Endothelial cell of umbilical vein (primary cell): ENCODE measurements at regions of chr19 and their contacts with region 1.

Region 1: GRCh38 chr19:1672038-1672768 is 19.8 kb upstream of the TCF3 start:
- DNase-seq: no peak
- H3K4me3 ChIP-seq: no peak overlapping the region
- H3K27ac ChIP-seq: no peak overlapping the region
- H3K4me1 ChIP-seq: no peaks in the 10 kb centered on the region
- H3K27me3 ChIP-seq: peaks cover 24 to 43% of the 10 kb centered on the region in 2 experiments
- CTCF ChIP-seq: peak; percentile 57 to 71
- POLR2A ChIP-seq: no peak

Region 2: GRCh38 chr19:1551068-1552040 is 120.8 kb before region 1 on chr19:
- CTCF ChIA-PET with region 1: interaction called, 177 read pairs
- POLR2A ChIA-PET with region 1: no interaction called
- dilution Hi-C with region 1: no loop called
- intact Hi-C with region 1: loop called (anchors 1 kb)
- DNase-seq: no peak
- H3K4me3 ChIP-seq: no peak overlapping the region
- H3K27ac ChIP-seq: no peak overlapping the region
- H3K4me1 ChIP-seq: no peaks in the 10 kb centered on the region
- H3K27me3 ChIP-seq: no peaks in the 10 kb centered on the region
- CTCF ChIP-seq: no peak
- POLR2A ChIP-seq: no peak

Region 3: DNA sequence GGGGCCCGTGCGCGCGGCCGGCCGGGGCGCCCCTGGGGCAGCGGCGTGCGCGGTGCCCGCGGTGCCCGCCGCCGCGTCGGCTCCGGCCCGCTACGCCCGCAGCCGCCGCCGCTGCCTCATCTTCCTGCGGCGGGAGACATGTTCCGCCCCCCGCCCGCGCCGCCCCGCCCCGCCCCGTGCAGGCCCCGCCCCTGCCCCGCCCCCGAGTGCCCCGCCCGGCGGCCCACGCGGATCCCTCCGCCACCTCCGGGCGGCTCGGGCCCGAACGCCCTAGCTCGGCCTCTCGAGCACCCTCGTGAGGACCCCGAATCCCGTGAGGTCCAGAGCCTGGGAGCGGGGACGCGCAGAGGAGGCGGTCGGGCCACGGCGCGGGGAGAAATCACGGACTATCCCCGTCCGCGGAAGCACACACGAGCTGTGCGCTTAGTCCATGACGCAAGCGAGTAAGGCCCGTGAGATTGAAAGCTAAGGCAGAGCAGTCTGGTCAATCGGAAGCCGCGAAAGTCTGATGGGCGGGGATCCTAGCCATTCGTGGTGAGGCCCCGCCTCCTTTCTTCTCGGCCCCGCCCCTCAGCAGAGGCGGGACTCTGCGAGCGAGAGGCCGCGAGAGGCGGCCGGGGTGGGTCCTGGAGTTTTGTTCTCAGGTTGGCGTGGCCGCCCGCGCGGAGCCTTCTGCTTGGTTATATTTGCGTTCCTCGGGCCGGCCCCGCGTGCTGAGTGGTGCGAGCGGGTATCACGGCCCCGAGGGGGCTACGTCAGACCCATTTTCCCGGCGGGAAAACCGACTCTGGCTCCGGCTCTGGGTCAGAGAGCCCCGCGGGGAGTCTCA is 19.5 kb before region 1 on chr19 and contains the start of gene TCF3:
- CTCF ChIA-PET with region 1: interaction called, 10 read pairs
- POLR2A ChIA-PET with region 1: no interaction called
- dilution Hi-C with region 1: no loop called
- intact Hi-C with region 1: no loop called
- DNase-seq: peak; percentile 99
- H3K4me3 ChIP-seq: peak within 1 kb of the TSS; percentile 45 to 89 (median 62)
- H3K27ac ChIP-seq: peak within 1 kb of the TSS; percentile 98
- H3K4me1 ChIP-seq: peaks cover 2% of the 10 kb centered on the region
- H3K27me3 ChIP-seq: no peaks in the 10 kb centered on the region
- CTCF ChIP-seq: no peak
- POLR2A ChIP-seq: peak; percentile 28
- total RNA-seq, gene TCF3: 193 and 197 TPM in 2 replicates

Region 4: DNA sequence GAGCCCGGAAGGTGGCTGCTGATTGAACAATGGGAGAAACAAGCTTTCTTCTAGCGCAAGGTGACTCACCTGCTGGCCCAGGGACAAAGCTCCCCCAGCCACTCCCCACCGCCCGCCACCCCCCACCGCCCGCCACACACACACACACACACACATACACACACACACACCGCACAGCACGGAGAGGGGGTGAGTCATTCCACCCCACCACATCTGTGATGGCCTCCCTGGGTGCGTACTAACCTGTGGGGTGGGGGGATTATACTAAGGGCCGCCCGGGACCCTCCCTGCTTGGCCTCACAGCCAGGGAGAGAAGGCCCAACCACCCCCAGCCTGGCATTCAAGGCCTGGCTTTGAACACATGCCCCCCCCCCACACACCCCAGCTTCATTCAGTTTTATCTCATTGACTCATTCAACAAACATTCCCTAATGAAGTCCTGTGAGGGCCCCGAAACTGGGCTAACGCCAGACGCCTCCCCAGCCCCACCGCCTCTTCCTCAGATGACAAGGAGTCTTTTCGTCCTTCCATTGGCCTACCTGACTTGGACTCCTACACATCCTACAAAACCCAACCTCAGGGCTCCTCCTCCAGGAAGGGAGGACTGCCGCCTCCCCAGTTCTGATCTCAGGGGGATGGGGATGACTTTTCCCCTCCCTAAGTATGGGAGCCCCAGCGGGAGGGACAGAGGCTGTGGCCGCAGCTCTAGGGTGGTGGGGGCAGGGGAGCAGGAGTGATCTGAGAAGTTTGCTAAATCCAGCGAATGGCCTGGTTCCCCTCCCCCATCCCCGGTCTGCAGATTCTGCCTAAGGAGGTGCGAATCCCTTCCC is 75.3 kb after region 1 on chr19:
- CTCF ChIA-PET with region 1: interaction called, 12 read pairs
- POLR2A ChIA-PET with region 1: no interaction called
- dilution Hi-C with region 1: no loop called
- intact Hi-C with region 1: no loop called
- DNase-seq: peak; percentile 31
- H3K4me3 ChIP-seq: no peak overlapping the region
- H3K27ac ChIP-seq: no peak overlapping the region
- H3K4me1 ChIP-seq: peaks cover 16% of the 10 kb centered on the region
- H3K27me3 ChIP-seq: peaks cover 44 to 47% of the 10 kb centered on the region in 2 experiments
- CTCF ChIP-seq: no peak
- POLR2A ChIP-seq: no peak

Region 5: GRCh38 chr19:1774999-1775772 is 103.0 kb after region 1 on chr19:
- CTCF ChIA-PET with region 1: interaction called, 29 read pairs
- POLR2A ChIA-PET with region 1: no interaction called
- dilution Hi-C with region 1: no loop called
- intact Hi-C with region 1: no loop called
- DNase-seq: no peak
- H3K4me3 ChIP-seq: no peak overlapping the region
- H3K27ac ChIP-seq: no peak overlapping the region
- H3K4me1 ChIP-seq: no peaks in the 10 kb centered on the region
- H3K27me3 ChIP-seq: peaks cover 28 to 34% of the 10 kb centered on the region in 2 experiments
- CTCF ChIP-seq: peak; percentile 39 to 64
- POLR2A ChIP-seq: no peak

Region 6: DNA sequence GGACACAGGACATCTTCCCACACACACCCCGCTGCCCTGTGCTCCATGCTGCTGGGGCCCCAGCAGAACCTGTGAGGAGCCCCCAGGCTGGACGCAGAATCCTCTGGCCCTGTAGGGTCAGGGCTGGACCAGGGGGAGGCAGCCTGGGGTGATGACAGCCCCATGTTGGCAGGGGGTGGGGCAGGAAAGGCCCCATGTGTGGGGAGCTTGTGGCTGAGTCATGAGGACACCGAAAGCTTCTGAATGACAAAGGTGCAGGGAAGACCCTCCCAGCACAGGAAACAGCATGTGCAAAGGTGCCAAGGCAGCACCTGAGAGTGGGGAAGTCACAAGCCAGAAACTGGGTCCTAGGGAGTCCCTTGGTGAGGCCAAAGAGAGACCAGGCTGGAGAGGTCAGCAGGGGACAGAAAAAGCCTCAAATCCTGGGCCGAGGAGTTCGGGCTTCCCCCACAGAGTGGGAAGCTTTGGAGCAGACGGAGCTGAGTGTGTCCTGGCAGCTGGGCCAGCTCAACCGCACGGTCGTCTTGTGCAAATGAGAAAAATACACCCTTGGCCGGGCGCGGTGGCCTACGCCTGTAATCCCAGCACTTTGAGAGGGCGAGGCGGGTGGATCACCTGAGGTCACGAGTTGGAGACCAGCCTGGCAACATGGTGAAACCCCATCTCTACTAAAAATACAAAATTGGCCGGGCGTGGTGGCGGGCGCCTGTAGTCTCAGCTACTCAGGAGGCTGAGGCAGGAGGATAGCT is 122.4 kb after region 1 on chr19:
- CTCF ChIA-PET with region 1: interaction called, 75 read pairs
- POLR2A ChIA-PET with region 1: no interaction called
- dilution Hi-C with region 1: no loop called
- intact Hi-C with region 1: loop called (anchors 5 kb)
- DNase-seq: no peak
- H3K4me3 ChIP-seq: no peak overlapping the region
- H3K27ac ChIP-seq: no peak overlapping the region
- H3K4me1 ChIP-seq: no peaks in the 10 kb centered on the region
- H3K27me3 ChIP-seq: no peaks in the 10 kb centered on the region
- CTCF ChIP-seq: no peak
- POLR2A ChIP-seq: no peak